Activated naive CD8-positive, alpha-beta T cell treated with anti-CD3 and anti-CD28 coated beads, Interleukin-2, amount 10 ng/mL, durations not matched to agents 7 days and 5 days (primary cell): ENCODE measurements at regions of chr19 and their contacts with region 1.

Region 1: DNA sequence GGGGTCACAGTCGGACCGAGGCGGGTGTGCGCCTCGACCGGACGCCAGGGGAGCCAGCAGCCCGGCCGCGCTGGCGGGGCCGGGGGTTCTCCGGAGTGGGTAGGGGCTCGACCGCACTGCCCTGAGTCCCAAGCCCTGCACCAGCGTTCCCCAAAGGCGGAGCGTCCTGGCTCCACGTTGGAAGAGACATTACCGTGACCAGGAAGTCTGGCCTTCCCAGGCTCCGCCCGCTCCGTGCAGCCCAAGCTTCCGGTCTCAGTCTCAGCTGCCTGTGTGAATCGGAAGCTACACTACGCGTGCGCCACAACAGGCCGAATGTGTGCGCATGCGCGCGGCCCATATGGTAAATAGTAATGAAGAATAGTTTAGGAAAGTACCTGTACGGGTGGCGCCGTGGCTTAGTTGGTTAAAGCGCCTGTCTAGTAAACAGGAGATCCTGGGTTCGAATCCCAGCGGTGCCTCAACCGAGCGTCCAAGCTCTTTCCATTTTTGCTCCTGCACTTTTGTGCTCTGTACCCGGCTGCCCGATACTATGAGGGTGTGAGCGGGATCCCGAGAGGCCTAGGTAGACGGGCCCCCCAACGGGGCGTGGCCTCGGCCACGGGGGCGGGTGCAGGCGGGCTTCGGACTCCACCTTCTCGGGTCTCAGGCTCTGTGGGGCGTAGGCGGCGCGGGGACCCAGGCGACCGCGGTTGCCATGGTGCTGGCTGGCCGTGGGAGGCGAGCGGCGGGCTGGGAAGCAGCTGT is 17.3 kb upstream of the LRP3 start:
- DNase-seq: peak; percentile 98
- ATAC-seq: peak; percentile 86
- H3K4me3 Mint-ChIP-seq: peak overlapping the region; percentile 96
- H3K27ac Mint-ChIP-seq: peak overlapping the region; percentile 92
- H3K4me1 Mint-ChIP-seq: peaks cover 19% of the 10 kb centered on the region
- H3K27me3 Mint-ChIP-seq: peaks cover 3% of the 10 kb centered on the region

Region 2: GRCh38 chr19:33156334-33156733 is 20.5 kb before region 1 on chr19:
- POLR2A ChIA-PET with region 1: interaction called, 122 read pairs
- DNase-seq: no peak
- ATAC-seq: no peak
- H3K4me3 Mint-ChIP-seq: no peak overlapping the region
- H3K27ac Mint-ChIP-seq: no peak overlapping the region
- H3K4me1 Mint-ChIP-seq: peaks cover 32% of the 10 kb centered on the region
- H3K27me3 Mint-ChIP-seq: no peaks in the 10 kb centered on the region